HAP-1 (cell line): ENCODE measurements at regions of chr14 and their contacts with region 1.

Region 1: GRCh38 chr14:29558516-29558915 is 369.1 kb downstream of the PRKD1 start:
- DNase-seq: no peak
- H3K4me3 ChIP-seq: no peak overlapping the region
- H3K4me1 ChIP-seq: no peaks in the 10 kb centered on the region
- H3K27me3 ChIP-seq: no peaks in the 10 kb centered on the region

Region 2: DNA sequence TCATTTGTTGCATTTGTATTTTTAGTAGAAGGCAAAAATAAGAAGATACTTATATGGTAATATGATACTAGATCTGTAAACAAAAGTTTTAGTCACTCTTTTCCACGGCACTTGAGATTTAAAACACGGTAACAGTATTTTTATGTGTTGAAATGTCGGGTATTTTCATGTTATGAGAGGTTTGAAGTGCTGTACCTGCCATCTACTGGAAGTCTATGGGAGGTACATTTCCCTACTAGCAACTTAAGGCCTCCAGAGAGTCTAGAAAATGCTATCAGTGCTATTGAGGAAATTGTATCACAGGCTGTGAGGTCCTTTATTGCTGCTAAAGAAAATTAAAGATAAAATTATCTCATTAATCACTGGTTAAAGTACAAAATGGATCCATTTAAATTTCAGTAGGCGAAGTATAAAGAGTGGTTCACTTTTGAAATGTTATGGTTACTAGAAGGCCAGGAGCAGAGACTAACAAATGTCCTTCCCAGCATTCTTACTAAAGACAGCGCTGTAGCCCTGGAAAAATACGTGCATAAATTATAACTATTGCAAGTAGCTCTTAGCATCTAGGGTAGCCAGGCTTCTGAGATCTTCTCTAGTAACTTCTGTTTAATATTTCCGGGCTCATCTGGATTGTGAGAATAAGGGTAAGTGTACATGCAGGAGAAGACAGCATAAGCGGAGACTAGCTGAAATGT is 446.7 kb after region 1 on chr14:
- in situ Hi-C with region 1: loop called (anchors 10 kb)
- DNase-seq: peak in 1 of 2 experiments; percentile 64
- H3K4me3 ChIP-seq: no peak overlapping the region
- H3K4me1 ChIP-seq: peaks cover 28% of the 10 kb centered on the region
- H3K27me3 ChIP-seq: 0 out of 2 replicates have a peak, but pooled peaks cover 2% of the 10 kb centered on the region